PC-3 (cell line): ENCODE measurements at regions of chr5 and their contacts with region 1.

Region 1: GRCh38 chr5:58322453-58322852 is 137.4 kb downstream of the PLK2 start:
- DNase-seq: peak; percentile 51
- ATAC-seq: peak; percentile 29; the same call in 1 of the 2 replicates
- H3K4me3 ChIP-seq: no peak overlapping the region; the same call in 1 of the 2 replicates
- H3K27ac ChIP-seq: no peak overlapping the region
- H3K4me1 ChIP-seq: peaks cover 25% of the 10 kb centered on the region
- H3K27me3 ChIP-seq: no peaks in the 10 kb centered on the region
- CTCF ChIP-seq: no peak

Region 2: GRCh38 chr5:58198330-58198729 is 124.1 kb before region 1 on chr5:
- CTCF ChIA-PET with region 1: no interaction called
- POLR2A ChIA-PET with region 1: no interaction called
- intact Hi-C with region 1: loop called (anchors 5 kb)
- DNase-seq: no peak
- ATAC-seq: no peak
- H3K4me3 ChIP-seq: no peak overlapping the region
- H3K27ac ChIP-seq: peak overlapping the region; percentile 40
- H3K4me1 ChIP-seq: peaks cover 14% of the 10 kb centered on the region
- H3K27me3 ChIP-seq: no peaks in the 10 kb centered on the region
- CTCF ChIP-seq: no peak

Region 3: DNA sequence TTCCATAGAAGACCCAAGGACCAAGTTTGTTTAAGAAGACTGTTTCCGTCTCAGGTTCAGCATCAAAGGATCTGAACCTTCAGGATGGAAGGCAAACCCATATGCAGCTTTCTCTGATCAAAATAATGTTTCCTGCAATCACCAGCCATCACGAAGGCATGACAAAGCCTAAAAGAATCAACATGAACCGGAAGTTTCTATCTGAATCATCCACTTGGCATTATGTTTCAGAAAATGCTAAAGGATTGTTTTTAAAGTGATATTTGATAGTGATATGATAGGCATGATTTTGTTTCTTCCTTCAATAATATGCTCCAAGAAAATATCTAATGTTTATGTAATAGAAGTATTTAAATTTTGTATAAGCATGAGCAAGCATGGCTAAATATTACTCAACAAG is 82.2 kb before region 1 on chr5:
- CTCF ChIA-PET with region 1: no interaction called
- POLR2A ChIA-PET with region 1: no interaction called
- intact Hi-C with region 1: loop called (anchors 10 kb)
- DNase-seq: peak; percentile 64
- ATAC-seq: peak; percentile 57
- H3K4me3 ChIP-seq: no peak overlapping the region
- H3K27ac ChIP-seq: peak overlapping the region; percentile 59
- H3K4me1 ChIP-seq: peaks cover 30% of the 10 kb centered on the region
- H3K27me3 ChIP-seq: no peaks in the 10 kb centered on the region
- CTCF ChIP-seq: no peak